Activated CD8-positive, alpha-beta T cell treated with anti-CD3 and anti-CD28 coated beads, Interleukin-2, amount 10 ng/mL, durations not matched to agents 7 days and 5 days (primary cell): ENCODE measurements at regions of chr19 and their contacts with region 1.

Region 1: GRCh38 chr19:39328046-39328705 is 7.5 kb upstream of the LRFN1 start:
- DNase-seq: peak; percentile 86
- ATAC-seq: peak; percentile 68
- H3K4me3 Mint-ChIP-seq: no peak overlapping the region
- H3K27ac Mint-ChIP-seq: peak overlapping the region; percentile 46
- H3K4me1 Mint-ChIP-seq: peaks cover 42% of the 10 kb centered on the region
- H3K27me3 Mint-ChIP-seq: no peaks in the 10 kb centered on the region

Region 2: DNA sequence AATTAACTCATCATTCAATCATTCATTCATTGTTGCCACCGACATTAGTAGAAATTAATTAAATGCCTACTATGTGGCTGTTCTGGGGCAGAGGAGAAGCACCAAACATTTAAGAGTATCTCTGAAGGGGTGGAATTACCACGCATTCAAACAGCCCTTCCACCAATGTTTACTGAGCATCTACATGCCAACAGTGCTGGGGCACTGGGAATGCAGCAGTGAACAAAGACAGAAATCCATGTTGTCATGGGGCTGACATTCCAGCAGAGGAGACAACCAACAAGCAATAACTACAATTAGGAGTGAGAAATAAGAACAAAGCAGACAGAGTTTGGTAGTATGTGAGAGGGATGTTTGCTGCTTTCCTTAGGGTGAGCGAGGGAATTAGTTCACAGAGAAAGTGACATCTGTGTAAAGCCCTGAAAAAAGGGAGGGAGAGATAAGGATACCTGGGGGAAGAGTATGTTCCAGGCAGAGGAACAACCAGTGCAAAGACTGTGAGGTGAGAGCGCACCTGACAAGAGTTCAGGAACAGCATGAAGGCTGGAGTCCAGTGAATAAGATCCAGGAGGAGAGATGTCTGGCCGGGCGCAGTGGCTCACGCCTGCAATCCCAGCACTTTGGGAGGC is 203.9 kb before region 1 on chr19:
- CTCF ChIA-PET with region 1: interaction called, 20 read pairs
- POLR2A ChIA-PET with region 1: interaction called, 6 read pairs
- DNase-seq: no peak
- ATAC-seq: no peak
- H3K4me3 Mint-ChIP-seq: peak overlapping the region; percentile 29
- H3K27ac Mint-ChIP-seq: no peak overlapping the region
- H3K4me1 Mint-ChIP-seq: peaks cover 34% of the 10 kb centered on the region
- H3K27me3 Mint-ChIP-seq: peaks cover 2% of the 10 kb centered on the region

Region 3: GRCh38 chr19:39212375-39212742 is 115.8 kb before region 1 on chr19:
- CTCF ChIA-PET with region 1: interaction called, 13 read pairs
- POLR2A ChIA-PET with region 1: interaction called, 4 read pairs
- DNase-seq: peak; percentile 80
- ATAC-seq: peak; percentile 91
- H3K4me3 Mint-ChIP-seq: no peak overlapping the region
- H3K27ac Mint-ChIP-seq: no peak overlapping the region
- H3K4me1 Mint-ChIP-seq: peaks cover 2% of the 10 kb centered on the region
- H3K27me3 Mint-ChIP-seq: peaks cover 15% of the 10 kb centered on the region

Region 4: GRCh38 chr19:39641773-39642172 is 313.6 kb after region 1 on chr19:
- CTCF ChIA-PET with region 1: no interaction called
- POLR2A ChIA-PET with region 1: no interaction called
- DNase-seq: no peak
- ATAC-seq: no peak
- H3K4me3 Mint-ChIP-seq: no peak overlapping the region
- H3K27ac Mint-ChIP-seq: no peak overlapping the region
- H3K4me1 Mint-ChIP-seq: no peaks in the 10 kb centered on the region
- H3K27me3 Mint-ChIP-seq: peaks cover 19% of the 10 kb centered on the region